Breast epithelium (tissue), 4 donors: ENCODE measurements at regions of chr12 and their contacts with region 1.

Region 1: GRCh38 chr12:52293926-52294325 is 2.6 kb upstream of the KRT81 start:
- DNase-seq: peak in 1 of 2 donors; percentile 19
- H3K4me3 ChIP-seq: no peak overlapping the region
- H3K27ac ChIP-seq: no peak overlapping the region
- H3K4me1 ChIP-seq: no peaks in the 10 kb centered on the region
- H3K27me3 ChIP-seq: no peaks in the 10 kb centered on the region
- CTCF ChIP-seq: no peak
- POLR2A ChIP-seq: no peak

Region 2: DNA sequence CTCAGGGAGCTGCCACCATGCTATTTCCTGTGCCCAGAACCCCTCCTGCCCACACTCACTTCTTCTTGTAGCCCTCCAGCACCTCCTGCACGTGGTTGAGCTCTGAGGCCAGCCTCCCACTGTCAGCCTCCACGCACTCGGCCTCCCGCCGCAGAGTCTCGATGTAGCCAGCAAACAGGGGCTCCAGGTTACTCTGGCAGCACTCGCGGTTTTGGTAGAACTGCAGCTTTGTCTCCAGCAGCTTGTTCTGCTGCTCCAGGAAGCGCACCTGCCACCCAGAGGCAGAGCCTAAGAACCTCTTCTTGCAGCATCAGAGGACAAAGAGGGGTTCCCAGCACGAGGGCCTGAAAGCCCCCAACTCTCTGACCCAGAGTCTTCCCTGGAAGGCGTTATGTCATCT is 25.2 kb after region 1 on chr12:
- intact Hi-C with region 1: loop called (anchors 1 kb)
- DNase-seq: no peak
- H3K4me3 ChIP-seq: no peak overlapping the region
- H3K27ac ChIP-seq: no peak overlapping the region
- H3K4me1 ChIP-seq: no peaks in the 10 kb centered on the region
- H3K27me3 ChIP-seq: peaks cover 0 to 8% of the 10 kb centered on the region in 2 donors
- CTCF ChIP-seq: peak in 2 of 3 donors; percentile 17 to 35
- POLR2A ChIP-seq: no peak